Activated CD4-positive, alpha-beta memory T cell treated with anti-CD3 and anti-CD28 coated beads for 36 hours (primary cell): ENCODE measurements at regions of chr5 and their contacts with region 1.

Region 1: GRCh38 chr5:139774980-139775661 is 20.5 kb upstream of the PSD2 start:
- DNase-seq: peak; percentile 88
- H3K4me3 Mint-ChIP-seq: no peak overlapping the region
- H3K27ac Mint-ChIP-seq: no peak overlapping the region
- H3K4me1 Mint-ChIP-seq: peaks cover 9% of the 10 kb centered on the region
- H3K27me3 Mint-ChIP-seq: peaks cover 5% of the 10 kb centered on the region

Region 2: GRCh38 chr5:139410993-139411828 is 363.9 kb before region 1 on chr5:
- CTCF ChIA-PET with region 1: no interaction called
- POLR2A ChIA-PET with region 1: no interaction called
- intact Hi-C with region 1: no loop called
- DNase-seq: no peak
- H3K4me3 Mint-ChIP-seq: no peak overlapping the region
- H3K27ac Mint-ChIP-seq: no peak overlapping the region
- H3K4me1 Mint-ChIP-seq: peaks cover 43% of the 10 kb centered on the region
- H3K27me3 Mint-ChIP-seq: no peaks in the 10 kb centered on the region

Region 3: GRCh38 chr5:139482050-139482889 is 292.9 kb before region 1 on chr5 and contains the start of gene STING1:
- CTCF ChIA-PET with region 1: no interaction called
- POLR2A ChIA-PET with region 1: no interaction called
- intact Hi-C with region 1: no loop called
- DNase-seq: peak; percentile 83
- H3K4me3 Mint-ChIP-seq: peak within 1 kb of the TSS; percentile 94
- H3K27ac Mint-ChIP-seq: peak within 1 kb of the TSS; percentile 99
- H3K4me1 Mint-ChIP-seq: peaks cover 38% of the 10 kb centered on the region
- H3K27me3 Mint-ChIP-seq: no peaks in the 10 kb centered on the region
- total RNA-seq, gene STING1: 339 to 344 TPM

Region 4: GRCh38 chr5:139755892-139756671 is 19.0 kb before region 1 on chr5:
- CTCF ChIA-PET with region 1: interaction called, 106 read pairs
- POLR2A ChIA-PET with region 1: no interaction called
- intact Hi-C with region 1: no loop called
- DNase-seq: peak; percentile 34
- H3K4me3 Mint-ChIP-seq: no peak overlapping the region
- H3K27ac Mint-ChIP-seq: no peak overlapping the region
- H3K4me1 Mint-ChIP-seq: peaks cover 20% of the 10 kb centered on the region
- H3K27me3 Mint-ChIP-seq: peaks cover 29% of the 10 kb centered on the region

Region 5: DNA sequence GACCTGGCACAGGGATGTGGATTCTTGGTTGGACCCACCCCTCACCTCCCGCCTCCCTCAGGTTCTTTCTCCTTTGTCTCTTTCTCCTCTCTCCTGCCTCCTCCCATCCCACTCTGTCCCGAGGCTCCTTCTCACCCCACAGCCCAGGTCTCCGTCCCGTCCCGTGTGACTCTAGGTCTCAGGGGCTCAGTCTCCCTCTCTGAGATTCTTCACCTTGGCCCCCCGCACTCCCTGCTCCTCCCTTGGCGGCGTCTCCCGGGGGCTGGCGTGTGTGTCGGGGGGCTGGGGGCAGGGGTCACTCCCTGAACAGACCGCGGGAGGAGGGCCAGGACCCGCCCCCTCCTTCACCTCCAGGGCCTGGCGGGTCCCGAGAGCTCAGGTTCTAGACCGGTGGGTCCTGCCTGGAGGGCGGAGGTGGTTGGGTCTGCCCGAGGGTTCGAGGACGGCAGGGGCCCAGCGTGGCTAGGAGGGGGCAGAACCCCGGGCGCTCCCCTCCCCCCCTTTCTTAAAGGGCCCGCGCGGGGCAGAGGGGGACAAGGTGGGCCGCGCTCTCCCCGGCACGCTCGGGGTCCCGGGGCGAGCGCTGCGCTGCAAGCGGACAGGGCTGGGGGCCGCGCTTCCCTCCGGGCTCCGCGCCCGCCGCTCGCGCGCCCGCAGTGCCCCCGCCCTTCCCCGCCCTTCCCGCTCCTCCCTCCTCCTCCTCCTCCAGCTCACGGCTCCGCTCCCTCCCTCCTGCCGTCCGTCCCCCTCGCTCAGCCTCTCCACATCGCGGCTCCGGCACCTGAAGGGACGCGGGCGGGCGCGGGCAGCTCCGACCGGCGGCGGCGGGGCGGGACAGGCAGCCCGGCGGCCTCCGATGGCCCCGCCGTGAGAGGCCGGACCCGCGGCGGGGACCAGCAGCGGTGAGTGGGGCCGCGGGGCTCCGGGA is 20.2 kb after region 1 on chr5 and contains the start of gene PSD2:
- CTCF ChIA-PET with region 1: interaction called, 14 read pairs
- POLR2A ChIA-PET with region 1: no interaction called
- intact Hi-C with region 1: no loop called
- DNase-seq: peak; percentile 36
- H3K4me3 Mint-ChIP-seq: no peak within 1 kb of the TSS
- H3K27ac Mint-ChIP-seq: no peak within 1 kb of the TSS
- H3K4me1 Mint-ChIP-seq: no peaks in the 10 kb centered on the region
- H3K27me3 Mint-ChIP-seq: peaks cover 40% of the 10 kb centered on the region
- total RNA-seq, gene PSD2: not detected

Region 6: DNA sequence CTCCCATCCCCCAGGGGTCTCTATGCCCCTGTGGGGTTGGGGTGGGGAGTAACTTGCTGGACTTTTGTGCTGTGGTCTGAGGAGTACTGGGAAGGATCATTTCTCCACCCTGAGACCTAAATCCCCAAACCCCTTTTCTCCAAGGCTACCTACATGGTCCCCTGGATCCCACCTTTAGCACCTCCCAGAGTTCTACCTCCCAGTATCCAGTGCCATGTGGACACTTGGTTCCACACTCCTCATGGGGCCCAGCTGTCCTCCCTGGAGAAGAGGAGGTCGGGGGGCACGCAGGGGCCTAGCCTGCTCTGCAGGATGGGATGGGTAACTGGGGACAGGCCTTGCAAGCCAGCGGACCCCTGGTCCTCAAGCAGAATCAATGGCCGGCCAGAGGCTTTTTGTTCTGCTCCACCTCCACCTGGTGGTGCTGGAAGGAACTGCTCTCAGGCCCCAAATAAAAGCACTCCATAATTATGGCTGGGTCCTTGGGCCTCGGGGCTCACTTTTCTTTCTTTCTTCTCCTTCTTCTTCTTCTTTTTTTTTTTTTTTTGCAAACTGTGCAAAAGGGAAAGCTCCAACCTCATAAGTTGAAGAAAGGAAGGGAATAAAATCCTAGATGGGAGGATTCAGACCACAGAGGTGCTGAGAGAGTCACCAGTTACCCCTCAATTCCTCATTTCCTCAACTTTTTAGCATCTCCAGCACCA is 88.9 kb after region 1 on chr5:
- CTCF ChIA-PET with region 1: interaction called, 21 read pairs
- POLR2A ChIA-PET with region 1: no interaction called
- intact Hi-C with region 1: no loop called
- DNase-seq: peak; percentile 66
- H3K4me3 Mint-ChIP-seq: no peak overlapping the region
- H3K27ac Mint-ChIP-seq: no peak overlapping the region
- H3K4me1 Mint-ChIP-seq: no peaks in the 10 kb centered on the region
- H3K27me3 Mint-ChIP-seq: no peaks in the 10 kb centered on the region

Region 7: DNA sequence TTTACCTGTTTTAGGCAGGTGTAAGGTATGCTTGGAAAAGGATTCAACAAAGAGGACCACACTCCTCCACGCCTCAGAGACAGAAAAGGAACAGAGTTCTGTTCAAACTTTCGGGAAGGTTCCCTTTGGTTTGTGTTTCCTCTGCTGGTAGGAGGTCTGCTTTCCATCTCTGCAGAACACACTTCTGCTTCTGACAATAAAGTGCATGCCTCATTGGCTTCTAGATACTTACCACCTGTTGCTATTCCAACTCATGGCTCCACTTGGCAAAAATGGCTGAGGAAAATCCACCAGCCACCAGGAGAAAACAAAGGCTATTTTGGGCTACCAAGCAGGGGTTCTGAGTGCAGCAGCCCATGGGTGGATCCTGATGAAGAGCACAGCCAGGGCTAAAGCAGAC is 155.3 kb after region 1 on chr5:
- CTCF ChIA-PET with region 1: no interaction called
- POLR2A ChIA-PET with region 1: no interaction called
- intact Hi-C with region 1: no loop called
- DNase-seq: no peak
- H3K4me3 Mint-ChIP-seq: no peak overlapping the region
- H3K27ac Mint-ChIP-seq: no peak overlapping the region
- H3K4me1 Mint-ChIP-seq: no peaks in the 10 kb centered on the region
- H3K27me3 Mint-ChIP-seq: peaks cover 23% of the 10 kb centered on the region